HEK293 (cell line): ENCODE measurements at regions of chr20 and their contacts with region 1.

Region 1: DNA sequence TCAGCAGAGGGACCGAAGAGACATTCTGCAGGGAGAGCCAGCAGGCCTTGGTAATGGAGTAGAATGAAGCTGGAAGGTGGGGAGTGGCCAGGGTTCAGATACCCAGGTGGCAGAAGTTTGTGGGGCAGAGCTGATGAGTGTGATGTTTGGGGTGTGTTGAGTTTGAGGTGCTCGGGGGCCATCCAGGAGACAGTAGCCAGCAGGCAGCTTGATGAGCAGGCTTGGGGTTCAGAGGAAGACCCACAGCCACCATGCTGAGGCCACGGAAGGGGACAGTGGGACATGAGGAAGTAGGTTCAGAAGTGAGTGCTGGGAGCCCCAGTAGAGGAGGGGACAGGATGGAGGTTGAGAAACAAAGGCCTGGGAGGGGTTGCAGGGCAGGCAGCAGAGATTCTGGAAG is 11.1 kb upstream of the FOXS1 start:
- H3K4me3 ChIP-seq: no peak overlapping the region
- H3K27ac ChIP-seq: no peak overlapping the region
- H3K4me1 ChIP-seq: no peaks in the 10 kb centered on the region
- CTCF ChIP-seq: no peak

Region 2: GRCh38 chr20:31751126-31751525 is 105.4 kb before region 1 on chr20:
- CTCF ChIA-PET with region 1: no interaction called
- POLR2A ChIA-PET with region 1: no interaction called
- H3K4me3 ChIP-seq: no peak overlapping the region
- H3K27ac ChIP-seq: no peak overlapping the region
- H3K4me1 ChIP-seq: peaks cover 6% of the 10 kb centered on the region; the same call in 1 of the 2 replicates
- CTCF ChIP-seq: no peak

Region 3: DNA sequence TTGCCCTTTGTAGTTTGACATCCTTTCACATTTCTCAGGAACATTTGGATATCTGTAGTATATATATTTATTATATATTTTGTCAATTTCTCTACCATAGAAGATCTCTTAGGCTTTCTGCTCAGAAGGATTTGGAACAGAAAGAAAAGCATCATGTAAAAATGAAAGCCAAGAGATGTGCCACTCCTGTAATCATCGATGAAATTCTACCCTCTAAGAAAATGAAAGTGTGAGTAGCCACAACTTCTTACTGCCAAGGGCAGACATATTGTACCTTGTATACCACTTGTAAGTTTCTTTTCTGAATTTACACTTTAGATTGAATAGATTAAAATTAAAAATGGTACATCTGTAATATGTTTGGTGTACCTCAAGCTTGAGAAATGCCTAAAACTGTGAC is 86.3 kb before region 1 on chr20:
- CTCF ChIA-PET with region 1: no interaction called
- POLR2A ChIA-PET with region 1: no interaction called
- H3K4me3 ChIP-seq: no peak overlapping the region
- H3K27ac ChIP-seq: no peak overlapping the region
- H3K4me1 ChIP-seq: no peaks in the 10 kb centered on the region
- CTCF ChIP-seq: no peak

Region 4: GRCh38 chr20:31842471-31843157 is 13.9 kb before region 1 on chr20:
- CTCF ChIA-PET with region 1: interaction called, 35 read pairs
- POLR2A ChIA-PET with region 1: no interaction called
- H3K4me3 ChIP-seq: no peak overlapping the region
- H3K27ac ChIP-seq: no peak overlapping the region
- H3K4me1 ChIP-seq: no peaks in the 10 kb centered on the region
- CTCF ChIP-seq: no peak